CD4-positive, alpha-beta T cell (primary cell): ENCODE measurements at regions of chr1 and their contacts with region 1.

Region 1: DNA sequence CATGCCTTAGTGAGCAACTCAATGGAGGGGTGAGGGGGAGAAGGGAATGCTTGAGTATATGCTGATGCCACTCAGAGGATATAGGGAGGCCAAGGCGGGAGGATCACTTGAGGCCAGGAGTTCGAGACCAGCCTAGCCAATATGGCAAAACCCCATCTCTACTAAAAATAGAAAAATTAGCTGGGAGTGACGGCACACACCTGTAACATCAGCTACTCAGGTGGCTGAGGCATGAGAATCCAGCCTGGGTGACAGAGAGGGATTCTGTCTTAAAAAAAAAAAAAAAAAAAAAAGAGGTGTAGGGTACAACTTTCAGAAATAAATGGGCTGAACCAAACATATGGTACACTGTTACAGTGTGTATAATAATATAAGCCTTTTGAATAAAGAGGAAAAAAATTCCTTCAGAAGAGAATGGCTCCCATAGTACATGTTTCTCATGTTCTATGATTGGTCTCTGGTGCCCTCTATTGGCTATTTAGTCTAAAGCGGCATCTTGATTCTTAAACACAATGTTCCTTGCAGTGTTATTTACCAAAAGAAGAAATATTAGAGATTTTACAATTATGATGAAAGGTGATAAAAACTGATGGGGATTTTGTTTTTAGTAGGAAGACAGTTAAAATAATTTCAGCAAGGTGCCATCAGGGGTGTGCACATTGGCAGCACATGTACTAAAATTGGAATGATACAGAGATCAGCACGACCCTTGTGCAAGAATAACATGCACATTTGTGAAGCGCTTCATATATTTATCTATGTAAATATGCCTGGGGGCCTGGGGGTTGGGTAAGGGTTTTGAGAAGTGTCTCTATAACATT is 109.8 kb downstream of the PATJ start:
- DNase-seq: peak in 3 of 14 experiments; percentile 69 to 75 (median 75)
- ATAC-seq: peak; percentile 54
- H3K4me3 ChIP-seq: no peak overlapping the region
- H3K4me3 Mint-ChIP-seq: no peak overlapping the region
- H3K27ac ChIP-seq: no peak overlapping the region
- H3K27ac Mint-ChIP-seq: no peak overlapping the region
- H3K4me1 ChIP-seq: no peaks in the 10 kb centered on the region
- H3K4me1 Mint-ChIP-seq: no peaks in the 10 kb centered on the region
- H3K27me3 ChIP-seq: no peaks in the 10 kb centered on the region
- H3K27me3 Mint-ChIP-seq: no peaks in the 10 kb centered on the region
- CTCF ChIP-seq: peak; percentile 92

Region 2: DNA sequence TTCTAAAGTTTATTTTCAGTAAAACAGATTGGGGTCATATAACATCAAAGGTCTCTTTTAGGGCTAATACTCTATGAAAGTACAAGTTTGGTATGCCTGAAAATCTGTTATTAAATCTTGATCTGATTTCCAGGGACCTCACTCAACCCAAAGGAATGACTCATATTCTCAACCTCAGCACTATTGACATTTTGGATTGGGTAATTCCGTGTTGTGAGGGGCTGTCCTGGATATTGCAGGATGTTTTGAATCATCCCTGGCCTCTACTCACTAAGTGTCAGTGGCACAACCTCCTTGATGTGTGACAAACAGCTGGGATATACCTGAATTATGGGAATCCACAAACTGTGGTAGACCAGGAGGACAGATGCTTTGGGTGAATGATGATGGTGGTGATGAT is 1874.0 kb before region 1 on chr1:
- CTCF ChIA-PET with region 1: no interaction called
- POLR2A ChIA-PET with region 1: no interaction called
- intact Hi-C with region 1: loop called (anchors 1 to 2 kb)
- DNase-seq: no peak
- ATAC-seq: no peak
- H3K4me3 ChIP-seq: no peak overlapping the region
- H3K4me3 Mint-ChIP-seq: no peak overlapping the region
- H3K27ac ChIP-seq: no peak overlapping the region
- H3K27ac Mint-ChIP-seq: no peak overlapping the region
- H3K4me1 ChIP-seq: no peaks in the 10 kb centered on the region
- H3K4me1 Mint-ChIP-seq: no peaks in the 10 kb centered on the region
- H3K27me3 ChIP-seq: peaks cover 7 to 14% of the 10 kb centered on the region in 2 experiments
- H3K27me3 Mint-ChIP-seq: peaks cover 23% of the 10 kb centered on the region
- CTCF ChIP-seq: no peak

Region 3: GRCh38 chr1:60978421-60979357 is 873.4 kb before region 1 on chr1:
- CTCF ChIA-PET with region 1: interaction called, 3 read pairs
- POLR2A ChIA-PET with region 1: no interaction called
- intact Hi-C with region 1: loop called (anchors 5 kb)
- DNase-seq: peak in 12 of 14 experiments; percentile 1 to 58 (median 19)
- ATAC-seq: peak; percentile 61
- H3K4me3 ChIP-seq: no peak overlapping the region
- H3K4me3 Mint-ChIP-seq: no peak overlapping the region
- H3K27ac ChIP-seq: no peak overlapping the region
- H3K27ac Mint-ChIP-seq: no peak overlapping the region
- H3K4me1 ChIP-seq: no peaks in the 10 kb centered on the region
- H3K4me1 Mint-ChIP-seq: no peaks in the 10 kb centered on the region
- H3K27me3 ChIP-seq: no peaks in the 10 kb centered on the region
- H3K27me3 Mint-ChIP-seq: no peaks in the 10 kb centered on the region
- CTCF ChIP-seq: peak; percentile 15

Region 4: GRCh38 chr1:61210435-61211154 is 641.5 kb before region 1 on chr1:
- CTCF ChIA-PET with region 1: no interaction called
- POLR2A ChIA-PET with region 1: no interaction called
- intact Hi-C with region 1: loop called in 1 of 2 experiments (anchors 5 kb)
- DNase-seq: peak in 3 of 14 experiments; percentile 19 to 26 (median 22)
- ATAC-seq: no peak
- H3K4me3 ChIP-seq: no peak overlapping the region
- H3K4me3 Mint-ChIP-seq: no peak overlapping the region
- H3K27ac ChIP-seq: no peak overlapping the region
- H3K27ac Mint-ChIP-seq: no peak overlapping the region
- H3K4me1 ChIP-seq: no peaks in the 10 kb centered on the region
- H3K4me1 Mint-ChIP-seq: no peaks in the 10 kb centered on the region
- H3K27me3 ChIP-seq: no peaks in the 10 kb centered on the region
- H3K27me3 Mint-ChIP-seq: no peaks in the 10 kb centered on the region
- CTCF ChIP-seq: peak; percentile 20

Region 5: GRCh38 chr1:61539720-61540462 is 312.2 kb before region 1 on chr1:
- CTCF ChIA-PET with region 1: no interaction called
- POLR2A ChIA-PET with region 1: no interaction called
- intact Hi-C with region 1: loop called in 1 of 2 experiments (anchors 10 kb)
- DNase-seq: no peak
- ATAC-seq: no peak
- H3K4me3 ChIP-seq: no peak overlapping the region
- H3K4me3 Mint-ChIP-seq: no peak overlapping the region
- H3K27ac ChIP-seq: no peak overlapping the region
- H3K27ac Mint-ChIP-seq: no peak overlapping the region
- H3K4me1 ChIP-seq: no peaks in the 10 kb centered on the region
- H3K4me1 Mint-ChIP-seq: peaks cover 3% of the 10 kb centered on the region
- H3K27me3 ChIP-seq: no peaks in the 10 kb centered on the region
- H3K27me3 Mint-ChIP-seq: peaks cover 3% of the 10 kb centered on the region
- CTCF ChIP-seq: no peak

Region 6: DNA sequence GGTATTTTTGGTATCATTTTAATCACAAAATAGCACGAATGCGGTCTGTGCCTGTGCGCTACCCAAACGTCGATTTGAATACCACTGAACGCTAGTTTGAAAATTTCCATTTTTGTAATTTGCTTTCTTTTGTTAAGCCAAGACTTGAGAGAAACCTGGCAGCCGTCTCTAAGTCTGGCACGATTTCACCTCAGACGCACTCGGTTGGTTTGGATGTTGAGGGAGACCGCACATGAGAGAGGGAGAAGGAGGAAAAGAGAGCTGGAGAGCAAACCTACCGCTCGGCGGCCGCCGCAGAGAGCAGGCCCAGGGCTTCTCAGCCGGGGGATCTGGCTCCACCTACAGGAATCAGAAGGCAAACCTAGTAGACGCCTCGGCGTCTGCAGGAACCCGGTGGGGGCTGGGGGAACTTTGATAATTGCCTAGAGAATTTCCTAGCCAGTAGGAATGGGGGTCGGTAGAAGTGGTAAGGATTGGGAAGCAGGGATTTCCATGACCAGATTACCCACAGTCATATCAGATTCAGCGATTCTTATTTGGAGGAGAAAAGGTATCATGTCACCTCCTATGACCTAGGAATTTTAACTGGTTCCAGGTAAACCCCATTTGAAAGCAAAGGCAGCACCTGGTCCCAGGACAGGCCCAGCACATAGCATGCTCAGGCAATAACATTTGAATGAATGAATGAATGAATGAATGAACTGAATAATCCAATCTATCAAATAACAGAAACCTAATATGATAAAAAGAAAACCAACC is 210.3 kb before region 1 on chr1:
- CTCF ChIA-PET with region 1: no interaction called
- POLR2A ChIA-PET with region 1: no interaction called
- intact Hi-C with region 1: loop called in 1 of 2 experiments (anchors 5 kb)
- DNase-seq: peak; percentile 23 to 75 (median 46)
- ATAC-seq: peak; percentile 91
- H3K4me3 ChIP-seq: no peak overlapping the region
- H3K4me3 Mint-ChIP-seq: peak overlapping the region; percentile 81
- H3K27ac ChIP-seq: no peak overlapping the region
- H3K27ac Mint-ChIP-seq: peak overlapping the region; percentile 62
- H3K4me1 ChIP-seq: peaks cover 13% of the 10 kb centered on the region
- H3K4me1 Mint-ChIP-seq: peaks cover 13% of the 10 kb centered on the region
- H3K27me3 ChIP-seq: no peaks in the 10 kb centered on the region
- H3K27me3 Mint-ChIP-seq: no peaks in the 10 kb centered on the region
- CTCF ChIP-seq: peak; percentile 76